Activated naive CD4-positive, alpha-beta T cell treated with anti-CD3 and anti-CD28 coated beads for 36 hours (primary cell): ENCODE measurements at regions of chr22 and their contacts with region 1.

Region 1: GRCh38 chr22:36194971-36195370 is 6.6 kb downstream of the APOL4 start:
- DNase-seq: peak; percentile 71
- H3K4me3 Mint-ChIP-seq: no peak overlapping the region
- H3K27ac Mint-ChIP-seq: no peak overlapping the region
- H3K4me1 Mint-ChIP-seq: peaks cover 13% of the 10 kb centered on the region
- H3K27me3 Mint-ChIP-seq: no peaks in the 10 kb centered on the region

Region 2: DNA sequence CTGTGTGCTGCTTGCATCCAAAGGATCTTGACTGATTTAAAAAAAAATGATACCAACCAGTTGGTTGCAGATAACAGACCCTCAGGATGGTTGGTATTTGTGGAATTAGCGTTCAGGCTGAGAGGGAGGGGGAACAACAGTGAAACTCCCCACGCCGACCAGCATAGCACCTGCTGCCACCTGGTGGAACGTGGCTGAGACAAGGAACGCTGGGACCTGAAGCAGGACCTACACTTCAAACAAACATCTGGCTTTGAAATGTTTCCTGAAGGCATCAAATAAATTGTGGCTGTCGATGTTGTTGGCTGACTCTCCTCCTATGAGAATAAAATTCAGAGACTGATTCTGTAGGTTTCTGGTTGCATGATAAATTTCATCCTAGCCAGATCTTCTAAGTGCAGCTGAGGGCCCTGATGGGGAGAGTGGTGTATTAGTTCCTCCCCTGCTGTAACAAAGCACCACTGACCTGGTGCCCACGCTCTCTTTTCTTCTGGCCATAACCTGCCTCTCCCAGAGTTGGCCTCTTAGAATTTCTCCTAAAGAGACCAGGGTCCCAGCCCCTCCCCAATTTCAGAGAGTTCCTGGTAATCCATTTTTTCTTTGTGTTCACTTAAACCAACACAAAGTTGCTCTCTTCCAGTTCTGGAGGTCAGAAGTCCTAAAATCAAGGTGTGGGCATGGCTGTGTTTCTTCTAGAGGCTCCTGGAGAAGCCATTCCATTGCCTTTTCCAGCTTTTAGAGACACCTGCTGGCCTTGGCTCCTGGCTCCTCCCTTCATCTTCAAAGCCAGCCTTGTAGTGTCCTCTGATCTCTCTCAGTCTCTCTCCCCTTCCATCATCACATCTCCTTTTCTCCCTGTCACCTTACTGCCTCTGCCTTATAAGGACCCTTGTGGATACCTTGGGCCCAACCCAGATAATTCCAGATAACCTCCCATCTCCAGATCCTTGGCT is 27.1 kb after region 1 on chr22:
- CTCF ChIA-PET with region 1: interaction called, 4 read pairs
- intact Hi-C with region 1: loop called (anchors 2 kb)
- DNase-seq: peak; percentile 62
- H3K4me3 Mint-ChIP-seq: no peak overlapping the region
- H3K27ac Mint-ChIP-seq: no peak overlapping the region
- H3K4me1 Mint-ChIP-seq: peaks cover 11% of the 10 kb centered on the region
- H3K27me3 Mint-ChIP-seq: no peaks in the 10 kb centered on the region

Region 3: DNA sequence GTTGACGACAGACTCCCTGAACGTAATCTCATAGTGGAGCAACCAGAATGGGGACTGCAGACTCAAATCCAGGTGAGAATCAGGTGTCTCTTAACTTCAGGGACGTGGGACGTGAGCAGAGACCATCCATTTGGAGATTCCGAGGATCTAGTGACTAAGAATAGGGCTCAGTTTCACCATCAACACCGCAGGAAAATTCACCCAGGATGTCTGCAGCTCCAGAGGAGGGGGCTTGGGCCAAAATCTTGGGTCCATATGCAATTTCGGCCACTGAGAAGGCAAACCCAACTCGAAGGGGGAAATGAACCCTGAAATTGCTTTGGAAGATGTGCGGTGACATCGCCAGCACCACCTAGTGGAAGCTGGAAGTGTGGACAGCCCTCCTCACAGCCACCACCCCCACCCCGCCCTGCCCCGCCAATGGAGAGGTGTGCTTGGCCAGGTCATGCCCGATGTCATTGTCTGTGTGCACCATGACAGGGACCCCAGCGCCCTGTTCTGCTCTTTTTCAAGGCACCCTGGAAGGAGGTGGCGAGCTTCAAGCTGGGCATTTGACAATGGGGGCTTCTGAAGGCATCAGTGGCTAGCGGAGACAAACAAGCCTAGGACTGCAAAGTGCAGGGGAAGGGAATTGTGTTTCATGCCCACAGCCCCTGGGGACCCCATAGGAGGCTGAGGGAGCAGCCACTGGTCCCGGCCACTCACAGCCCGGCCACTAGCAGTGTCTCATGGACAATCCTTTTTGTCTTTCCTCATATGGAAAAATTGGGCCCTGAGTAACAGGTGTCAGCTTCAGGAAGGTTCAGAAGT is 82.7 kb after region 1 on chr22:
- CTCF ChIA-PET with region 1: interaction called, 16 read pairs
- intact Hi-C with region 1: loop called (anchors 1 kb)
- DNase-seq: peak; percentile 81
- H3K4me3 Mint-ChIP-seq: no peak overlapping the region
- H3K27ac Mint-ChIP-seq: peak overlapping the region; percentile 58
- H3K4me1 Mint-ChIP-seq: peaks cover 23% of the 10 kb centered on the region
- H3K27me3 Mint-ChIP-seq: no peaks in the 10 kb centered on the region